GM12878 (cell line): ENCODE measurements at regions of chr6 and their contacts with region 1.

Region 1: DNA sequence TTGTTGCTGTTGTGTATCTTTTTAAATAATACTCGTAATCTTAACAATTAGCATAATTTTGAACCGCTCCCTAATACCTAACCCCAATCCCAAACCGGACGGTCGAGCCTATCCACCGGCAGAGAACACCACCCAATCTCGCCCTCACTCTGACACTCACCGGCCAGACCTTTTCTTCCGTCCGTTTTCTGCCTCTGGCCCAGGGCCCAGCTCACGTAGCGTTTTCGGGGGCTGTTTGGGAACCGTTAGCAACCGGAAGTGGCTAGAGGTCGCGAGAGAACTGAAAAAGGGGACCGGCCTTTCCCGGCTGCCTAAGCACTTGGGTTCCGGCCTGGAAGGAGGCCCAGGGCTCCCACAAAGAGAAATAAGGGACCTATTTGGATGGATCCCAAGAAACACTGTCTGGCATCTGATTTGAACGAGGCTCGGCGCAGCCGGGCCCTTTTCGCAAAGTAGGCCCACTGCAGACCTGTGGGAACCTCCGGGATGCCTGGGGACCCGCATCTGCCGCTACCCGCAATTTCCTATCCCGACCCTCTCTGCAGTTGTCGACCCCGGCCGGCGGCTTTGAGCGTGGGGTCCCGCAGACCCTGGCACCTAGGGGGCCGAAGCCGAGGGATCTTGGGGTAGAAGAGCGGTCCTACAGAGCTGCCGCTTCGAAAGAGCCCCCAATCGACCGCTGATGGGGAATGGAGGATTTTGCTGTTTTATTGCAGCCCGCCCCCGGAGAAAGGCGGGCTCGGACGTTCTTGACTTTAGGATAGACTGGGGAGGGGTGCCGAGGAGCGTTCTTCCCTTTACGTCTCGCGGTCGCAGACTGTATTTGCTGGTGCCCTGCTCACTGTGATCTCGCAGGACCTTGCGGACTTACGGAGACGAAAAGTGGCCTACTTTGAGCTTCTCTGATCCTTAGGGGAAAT is 4.8 kb upstream of the ZKSCAN8 start:
- DNase-seq: peak; percentile 56
- ATAC-seq: peak; percentile 77
- H3K4me3 ChIP-seq: peak overlapping the region; percentile 88
- H3K27ac ChIP-seq: peak overlapping the region; percentile 92
- H3K4me1 ChIP-seq: peaks cover 20% of the 10 kb centered on the region
- H3K27me3 ChIP-seq: no peaks in the 10 kb centered on the region
- CTCF ChIP-seq: no peak
- EP300 ChIP-seq: peak in 1 of 2 experiments; percentile 57; a peak in 1 of 4 replicates
- POLR2A ChIP-seq: peak; percentile 89
- RAD21 ChIP-seq: peak; percentile 25; the same call in 1 of the 2 replicates

Region 2: GRCh38 chr6:27706431-27706830 is 430.4 kb before region 1 on chr6:
- CTCF ChIA-PET with region 1: no interaction called
- POLR2A ChIA-PET with region 1: no interaction called
- RAD21 ChIA-PET with region 1: no interaction called
- SMC1A ChIA-PET with region 1: no interaction called
- in situ Hi-C with region 1: no loop called
- intact Hi-C with region 1: no loop called
- DNase-seq: no peak
- ATAC-seq: no peak
- H3K4me3 ChIP-seq: no peak overlapping the region
- H3K27ac ChIP-seq: no peak overlapping the region
- H3K4me1 ChIP-seq: no peaks in the 10 kb centered on the region
- H3K27me3 ChIP-seq: no peaks in the 10 kb centered on the region
- CTCF ChIP-seq: no peak
- EP300 ChIP-seq: no peak
- POLR2A ChIP-seq: no peak
- RAD21 ChIP-seq: no peak

Region 3: GRCh38 chr6:27838058-27838944 is 298.5 kb before region 1 on chr6:
- CTCF ChIA-PET with region 1: no interaction called
- POLR2A ChIA-PET with region 1: no interaction called
- RAD21 ChIA-PET with region 1: no interaction called
- SMC1A ChIA-PET with region 1: interaction called, 3 read pairs
- in situ Hi-C with region 1: no loop called
- intact Hi-C with region 1: loop called (anchors 10 kb)
- DNase-seq: peak; percentile 100
- ATAC-seq: peak; percentile 81
- H3K4me3 ChIP-seq: peak overlapping the region; percentile 87
- H3K27ac ChIP-seq: peak overlapping the region; percentile 93
- H3K4me1 ChIP-seq: no peaks in the 10 kb centered on the region
- H3K27me3 ChIP-seq: no peaks in the 10 kb centered on the region
- CTCF ChIP-seq: no peak
- EP300 ChIP-seq: 0 out of 4 replicates have a peak, but pooled peaks of 1 of the 2 experiments have one; percentile 3
- POLR2A ChIP-seq: peak; percentile 81
- RAD21 ChIP-seq: no peak

Region 4: GRCh38 chr6:27994616-27995015 is 142.2 kb before region 1 on chr6:
- CTCF ChIA-PET with region 1: no interaction called
- POLR2A ChIA-PET with region 1: no interaction called
- RAD21 ChIA-PET with region 1: no interaction called
- SMC1A ChIA-PET with region 1: no interaction called
- in situ Hi-C with region 1: no loop called
- intact Hi-C with region 1: no loop called
- DNase-seq: no peak
- ATAC-seq: no peak
- H3K4me3 ChIP-seq: no peak overlapping the region
- H3K27ac ChIP-seq: no peak overlapping the region
- H3K4me1 ChIP-seq: no peaks in the 10 kb centered on the region
- H3K27me3 ChIP-seq: no peaks in the 10 kb centered on the region; a peak in 2 of 4 replicates
- CTCF ChIP-seq: no peak
- EP300 ChIP-seq: no peak
- POLR2A ChIP-seq: no peak
- RAD21 ChIP-seq: no peak

Region 5: GRCh38 chr6:28080631-28081485 is 56.0 kb before region 1 on chr6:
- CTCF ChIA-PET with region 1: no interaction called
- POLR2A ChIA-PET with region 1: interaction called, 3 read pairs
- RAD21 ChIA-PET with region 1: interaction called, 4 read pairs
- SMC1A ChIA-PET with region 1: interaction called, 3 read pairs
- in situ Hi-C with region 1: no loop called
- intact Hi-C with region 1: loop called (anchors 2 kb)
- DNase-seq: peak; percentile 91
- ATAC-seq: peak; percentile 81
- H3K4me3 ChIP-seq: peak overlapping the region; percentile 79
- H3K27ac ChIP-seq: peak overlapping the region; percentile 94
- H3K4me1 ChIP-seq: peaks cover 6% of the 10 kb centered on the region
- H3K27me3 ChIP-seq: no peaks in the 10 kb centered on the region
- CTCF ChIP-seq: no peak
- EP300 ChIP-seq: peak in 1 of 2 experiments; percentile 6; a peak in 1 of 4 replicates
- POLR2A ChIP-seq: no peak
- RAD21 ChIP-seq: no peak

Region 6: GRCh38 chr6:28212510-28213212 is 75.8 kb after region 1 on chr6:
- CTCF ChIA-PET with region 1: no interaction called
- POLR2A ChIA-PET with region 1: interaction called, 4 read pairs
- RAD21 ChIA-PET with region 1: interaction called, 3 read pairs
- SMC1A ChIA-PET with region 1: interaction called, 10 read pairs
- in situ Hi-C with region 1: loop called (anchors 5 kb)
- intact Hi-C with region 1: loop called (anchors 5 kb)
- DNase-seq: peak; percentile 77
- ATAC-seq: peak; percentile 84
- H3K4me3 ChIP-seq: peak overlapping the region; percentile 75
- H3K27ac ChIP-seq: peak overlapping the region; percentile 48
- H3K4me1 ChIP-seq: peaks cover 16% of the 10 kb centered on the region
- H3K27me3 ChIP-seq: peaks cover 0 to 3% of the 10 kb centered on the region in 2 experiments; a peak in 2 of 4 replicates
- CTCF ChIP-seq: peak in 2 of 3 experiments; percentile 38 to 41; a peak in 4 of 6 replicates
- EP300 ChIP-seq: no peak; a peak in 1 of 4 replicates
- POLR2A ChIP-seq: no peak
- RAD21 ChIP-seq: peak; percentile 62

Region 7: DNA sequence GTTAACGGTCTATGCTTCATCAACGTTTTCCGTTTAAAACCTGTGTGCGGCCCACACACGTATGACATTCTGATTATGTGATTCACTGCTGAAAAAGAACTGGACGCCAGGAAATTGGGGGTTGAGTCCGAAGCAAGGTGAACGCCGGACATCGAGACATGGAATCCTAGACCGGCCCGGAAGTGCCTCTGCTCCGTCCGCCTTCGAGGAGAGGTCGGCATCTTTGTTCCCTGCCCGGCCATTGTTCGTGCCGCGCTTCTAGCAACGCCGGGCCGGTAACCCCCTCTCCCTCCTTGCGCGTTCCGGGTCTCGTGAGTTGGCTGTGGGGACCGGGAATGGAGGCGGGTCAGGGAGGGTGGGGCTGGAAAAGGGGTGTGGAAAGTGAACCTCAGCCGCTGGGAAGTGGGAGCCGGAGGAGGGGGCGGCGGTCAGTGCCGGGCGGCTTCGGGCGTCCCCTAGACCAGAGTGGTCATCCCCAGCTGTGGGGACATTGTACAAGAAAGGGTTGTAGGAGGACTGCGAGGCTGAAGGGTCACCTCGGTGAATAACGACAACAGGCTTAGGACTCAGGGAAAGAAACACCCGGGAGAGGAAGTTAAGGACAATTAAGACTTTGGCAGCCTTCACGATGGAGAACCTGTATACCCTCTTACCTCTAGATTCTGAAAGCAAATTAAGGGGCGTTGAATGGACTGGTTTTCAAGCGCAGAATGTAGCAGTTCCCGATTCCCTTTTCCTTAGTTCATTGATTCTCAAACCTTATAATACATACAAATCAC is 88.4 kb after region 1 on chr6 and contains the start of gene ZSCAN9:
- CTCF ChIA-PET with region 1: interaction called, 3 read pairs
- POLR2A ChIA-PET with region 1: interaction called, 4 read pairs
- RAD21 ChIA-PET with region 1: interaction called, 4 read pairs
- SMC1A ChIA-PET with region 1: interaction called, 3 read pairs
- in situ Hi-C with region 1: no loop called
- intact Hi-C with region 1: loop called (anchors 2 kb)
- DNase-seq: peak; percentile 44
- ATAC-seq: peak; percentile 98
- H3K4me3 ChIP-seq: peak within 1 kb of the TSS; percentile 89
- H3K27ac ChIP-seq: peak within 1 kb of the TSS; percentile 73
- H3K4me1 ChIP-seq: no peaks in the 10 kb centered on the region
- H3K27me3 ChIP-seq: no peaks in the 10 kb centered on the region
- CTCF ChIP-seq: no peak
- EP300 ChIP-seq: peak; percentile 15 to 35; a peak in 1 of 4 replicates
- POLR2A ChIP-seq: peak; percentile 95
- RAD21 ChIP-seq: no peak
- polyA plus RNA-seq, gene ZSCAN9: 10.2 to 12.4 TPM

Region 8: GRCh38 chr6:28266962-28267694 is 130.3 kb after region 1 on chr6 and contains the start of gene ZSCAN26:
- CTCF ChIA-PET with region 1: no interaction called
- POLR2A ChIA-PET with region 1: interaction called, 11 read pairs
- RAD21 ChIA-PET with region 1: interaction called, 5 read pairs
- SMC1A ChIA-PET with region 1: interaction called, 3 read pairs
- in situ Hi-C with region 1: no loop called
- intact Hi-C with region 1: no loop called
- DNase-seq: peak; percentile 70
- ATAC-seq: peak; percentile 98
- H3K4me3 ChIP-seq: peak within 1 kb of the TSS; percentile 96
- H3K27ac ChIP-seq: peak within 1 kb of the TSS; percentile 84
- H3K4me1 ChIP-seq: no peaks in the 10 kb centered on the region
- H3K27me3 ChIP-seq: no peaks in the 10 kb centered on the region
- CTCF ChIP-seq: no peak
- EP300 ChIP-seq: no peak
- POLR2A ChIP-seq: peak; percentile 82
- RAD21 ChIP-seq: 0 out of 2 replicates have a peak, but pooled peaks have one; percentile 4
- polyA plus RNA-seq, gene ZSCAN26: 4.6 to 5.4 TPM

Region 9: GRCh38 chr6:28399350-28400121 is 262.7 kb after region 1 on chr6 and contains the start of gene ZSCAN12:
- CTCF ChIA-PET with region 1: no interaction called
- POLR2A ChIA-PET with region 1: interaction called, 3 read pairs
- RAD21 ChIA-PET with region 1: interaction called, 3 read pairs
- SMC1A ChIA-PET with region 1: no interaction called
- in situ Hi-C with region 1: no loop called
- intact Hi-C with region 1: loop called (anchors 5 kb)
- DNase-seq: peak; percentile 61
- ATAC-seq: peak; percentile 86
- H3K4me3 ChIP-seq: peak within 1 kb of the TSS; percentile 80
- H3K27ac ChIP-seq: peak within 1 kb of the TSS; percentile 97
- H3K4me1 ChIP-seq: peaks cover 4% of the 10 kb centered on the region
- H3K27me3 ChIP-seq: no peaks in the 10 kb centered on the region
- CTCF ChIP-seq: peak; percentile 50 to 59 (median 54)
- EP300 ChIP-seq: peak in 1 of 2 experiments; percentile 39; a peak in 1 of 4 replicates
- POLR2A ChIP-seq: peak; percentile 87
- RAD21 ChIP-seq: peak; percentile 25; the same call in 1 of the 2 replicates
- polyA plus RNA-seq, gene ZSCAN12: 1.2 to 1.6 TPM

Region 10: GRCh38 chr6:28474441-28475219 is 337.8 kb after region 1 on chr6:
- CTCF ChIA-PET with region 1: no interaction called
- POLR2A ChIA-PET with region 1: no interaction called
- RAD21 ChIA-PET with region 1: no interaction called
- SMC1A ChIA-PET with region 1: no interaction called
- in situ Hi-C with region 1: no loop called
- intact Hi-C with region 1: no loop called
- DNase-seq: peak; percentile 76
- ATAC-seq: peak; percentile 87
- H3K4me3 ChIP-seq: peak overlapping the region; percentile 48; the same call in 1 of the 2 replicates
- H3K27ac ChIP-seq: no peak overlapping the region
- H3K4me1 ChIP-seq: no peaks in the 10 kb centered on the region
- H3K27me3 ChIP-seq: peaks cover 0 to 3% of the 10 kb centered on the region in 2 experiments; a peak in 3 of 4 replicates
- CTCF ChIP-seq: no peak
- EP300 ChIP-seq: peak in 1 of 2 experiments; percentile 48; a peak in 1 of 4 replicates
- POLR2A ChIP-seq: no peak
- RAD21 ChIP-seq: no peak